Activated B cell treated with CpG ODN at 0.5 μM for 24 hours (primary cell): ENCODE measurements at regions of chr2 and their contacts with region 1.

Region 1: DNA sequence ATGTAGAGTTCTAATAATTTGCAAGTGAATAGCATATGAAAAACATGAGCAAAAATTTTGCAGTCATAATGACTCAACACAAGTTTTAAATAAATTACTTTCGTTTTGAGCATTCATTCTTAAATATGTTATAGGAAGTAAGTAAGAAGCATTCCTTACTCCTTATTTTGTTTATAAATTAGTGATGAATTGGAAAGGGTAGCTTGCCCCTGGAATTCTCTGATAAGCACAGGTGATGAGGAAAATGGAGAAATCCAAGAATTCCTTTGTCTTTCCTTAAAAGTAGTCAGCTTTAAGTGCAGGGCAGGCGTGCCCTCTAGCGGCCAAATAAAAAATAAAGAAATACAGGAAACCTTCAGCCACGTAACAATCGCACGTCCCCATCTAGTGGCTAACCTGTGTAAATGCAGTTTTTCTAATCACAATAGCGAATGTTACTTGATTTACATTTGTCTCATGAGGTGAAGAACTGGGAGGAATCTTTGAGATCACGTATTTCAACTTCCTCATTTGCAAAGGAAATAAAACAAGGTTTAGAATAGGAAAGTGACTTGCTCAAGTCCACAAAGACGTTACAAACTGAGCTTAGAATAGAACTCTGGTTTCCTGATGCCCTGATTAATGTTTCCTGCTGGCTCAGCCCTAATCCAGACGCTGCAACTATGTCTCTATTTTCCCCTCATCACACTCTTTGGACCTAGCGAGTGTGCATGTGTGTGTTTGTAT is 47.2 kb upstream of the ZNG1B start:
- DNase-seq: peak; percentile 33
- ATAC-seq: peak; percentile 95
- H3K4me3 Mint-ChIP-seq: peak overlapping the region; percentile 50
- H3K27ac Mint-ChIP-seq: peak overlapping the region; percentile 96
- H3K4me1 Mint-ChIP-seq: peaks cover 18% of the 10 kb centered on the region
- H3K27me3 Mint-ChIP-seq: peaks cover 4% of the 10 kb centered on the region
- CTCF ChIP-seq: peak; percentile 83

Region 2: DNA sequence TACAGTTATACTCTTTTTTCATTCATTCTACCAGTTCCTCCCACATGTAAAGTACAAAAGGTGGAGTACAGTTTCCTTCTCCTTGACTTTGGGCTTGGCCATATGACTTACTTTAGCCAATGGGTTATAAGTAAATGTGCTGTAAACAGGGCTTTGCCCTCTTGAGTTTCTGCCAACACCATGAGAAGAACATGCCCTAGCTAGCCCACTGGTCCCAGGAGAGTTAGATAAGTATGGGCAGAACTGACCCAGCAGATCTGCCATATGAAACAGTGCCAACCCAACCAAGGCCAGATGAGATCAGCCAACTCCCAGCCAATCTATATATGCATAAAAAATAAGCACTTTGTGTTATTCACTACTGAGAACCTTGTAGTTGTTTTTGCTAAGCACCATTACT is 1160.9 kb before region 1 on chr2:
- CTCF ChIA-PET with region 1: no interaction called
- POLR2A ChIA-PET with region 1: no interaction called
- intact Hi-C with region 1: no loop called
- DNase-seq: no peak
- ATAC-seq: no peak
- H3K4me3 Mint-ChIP-seq: no peak overlapping the region
- H3K27ac Mint-ChIP-seq: no peak overlapping the region
- H3K4me1 Mint-ChIP-seq: no peaks in the 10 kb centered on the region
- H3K27me3 Mint-ChIP-seq: no peaks in the 10 kb centered on the region
- CTCF ChIP-seq: no peak

Region 3: GRCh38 chr2:113173542-113174395 is 216.5 kb before region 1 on chr2 and contains the start of gene PSD4:
- CTCF ChIA-PET with region 1: interaction called, 4 read pairs
- POLR2A ChIA-PET with region 1: interaction called, 16 read pairs
- intact Hi-C with region 1: loop called (anchors 1 kb)
- DNase-seq: peak; percentile 69
- ATAC-seq: peak; percentile 75
- H3K4me3 Mint-ChIP-seq: peak within 1 kb of the TSS; percentile 87
- H3K27ac Mint-ChIP-seq: peak within 1 kb of the TSS; percentile 91
- H3K4me1 Mint-ChIP-seq: peaks cover 85% of the 10 kb centered on the region
- H3K27me3 Mint-ChIP-seq: peaks cover 2% of the 10 kb centered on the region
- CTCF ChIP-seq: no peak
- total RNA-seq, gene PSD4: 161 and 182 TPM in 2 replicates

Region 4: DNA sequence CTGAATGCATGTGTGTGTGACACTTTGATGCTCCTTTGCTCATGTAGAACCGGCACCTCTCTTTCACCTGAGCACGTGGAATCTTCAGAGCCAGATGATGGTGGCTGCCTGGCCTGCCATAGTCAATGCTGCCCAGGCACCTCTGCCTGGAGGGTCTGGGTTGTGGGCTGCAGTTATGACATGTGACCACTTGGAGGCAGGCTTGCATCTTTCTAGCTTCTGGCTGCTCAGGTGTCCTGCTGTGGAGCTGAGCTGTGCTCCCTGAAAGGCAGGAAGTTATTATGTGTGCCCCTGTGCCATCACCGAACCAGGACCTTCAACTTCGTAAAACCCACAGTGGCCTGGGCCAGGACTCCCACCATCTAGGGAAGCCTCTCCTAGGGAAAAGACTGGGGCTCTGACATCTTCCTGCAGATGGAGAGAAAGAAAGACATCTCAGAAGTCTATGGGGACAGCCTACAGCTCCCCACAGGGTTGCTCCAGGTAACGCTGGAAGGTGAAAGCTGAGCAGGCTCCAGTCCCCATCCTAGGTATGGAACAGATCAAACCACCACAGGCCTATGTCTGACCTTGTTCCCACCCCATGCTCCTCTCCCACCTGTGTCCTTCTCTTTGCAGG is 186.3 kb before region 1 on chr2:
- CTCF ChIA-PET with region 1: interaction called, 17 read pairs
- POLR2A ChIA-PET with region 1: interaction called, 7 read pairs
- intact Hi-C with region 1: loop called (anchors 1 kb)
- DNase-seq: peak; percentile 54
- ATAC-seq: peak; percentile 78
- H3K4me3 Mint-ChIP-seq: no peak overlapping the region
- H3K27ac Mint-ChIP-seq: peak overlapping the region; percentile 74
- H3K4me1 Mint-ChIP-seq: peaks cover 16% of the 10 kb centered on the region
- H3K27me3 Mint-ChIP-seq: no peaks in the 10 kb centered on the region
- CTCF ChIP-seq: peak; percentile 27

Region 5: GRCh38 chr2:113298176-113298575 is 92.1 kb before region 1 on chr2:
- CTCF ChIA-PET with region 1: interaction called, 15 read pairs
- POLR2A ChIA-PET with region 1: no interaction called
- intact Hi-C with region 1: loop called (anchors 1 kb)
- DNase-seq: no peak
- ATAC-seq: no peak
- H3K4me3 Mint-ChIP-seq: no peak overlapping the region
- H3K27ac Mint-ChIP-seq: no peak overlapping the region
- H3K4me1 Mint-ChIP-seq: no peaks in the 10 kb centered on the region
- H3K27me3 Mint-ChIP-seq: peaks cover 15% of the 10 kb centered on the region
- CTCF ChIP-seq: no peak

Region 6: DNA sequence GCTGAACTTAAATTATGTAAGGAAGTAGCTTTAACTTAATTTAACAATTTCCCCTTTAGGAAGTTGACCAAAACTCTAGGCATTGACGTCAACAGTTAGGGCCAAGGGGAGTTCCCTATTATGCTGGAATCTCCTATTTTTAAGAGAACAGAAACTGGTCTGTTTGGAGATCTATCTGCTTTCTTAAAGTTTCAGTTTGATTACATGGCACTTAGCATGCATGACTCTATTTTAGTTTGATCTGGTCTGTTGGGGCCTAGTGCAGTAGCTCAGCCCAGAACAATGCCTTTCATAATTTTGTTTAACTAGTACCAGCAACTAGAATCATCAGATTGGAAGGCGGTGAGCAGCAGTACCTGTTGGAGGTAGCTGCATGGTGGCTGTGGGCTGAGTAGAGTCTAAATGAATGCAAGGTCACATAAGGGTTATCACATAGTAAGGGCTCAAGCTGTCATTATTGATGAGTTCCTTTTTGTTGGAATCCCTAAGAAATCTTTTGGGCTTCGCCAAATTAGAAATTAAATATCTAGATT is 13.3 kb before region 1 on chr2:
- CTCF ChIA-PET with region 1: interaction called, 24 read pairs
- POLR2A ChIA-PET with region 1: interaction called, 18 read pairs
- intact Hi-C with region 1: loop called (anchors 1 kb)
- DNase-seq: no peak
- ATAC-seq: peak; percentile 92
- H3K4me3 Mint-ChIP-seq: peak overlapping the region; percentile 70
- H3K27ac Mint-ChIP-seq: peak overlapping the region; percentile 94
- H3K4me1 Mint-ChIP-seq: peaks cover 53% of the 10 kb centered on the region
- H3K27me3 Mint-ChIP-seq: no peaks in the 10 kb centered on the region
- CTCF ChIP-seq: no peak